ENCODE measurements at regions of chr1 and their contacts with region 1.

Region 1: DNA sequence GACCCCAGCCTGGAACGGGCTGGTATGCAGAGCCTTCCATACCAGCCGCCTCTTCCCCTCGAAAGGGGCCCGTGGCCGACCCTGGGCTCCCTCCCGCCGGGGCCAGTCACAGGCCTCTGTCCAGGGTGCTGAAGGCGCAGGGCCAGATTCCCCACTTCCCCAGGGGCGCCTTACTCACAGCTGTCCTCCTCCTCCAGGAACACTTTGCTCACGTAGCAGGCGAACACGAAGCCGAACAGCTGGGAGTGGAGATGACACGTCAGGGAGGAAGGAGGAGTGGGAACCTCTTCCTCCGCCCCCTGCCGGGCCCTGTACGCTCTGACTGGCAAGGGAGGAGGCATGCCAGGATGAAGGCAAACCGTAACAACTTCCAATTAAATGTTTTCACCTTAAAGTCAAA is 57.3 kb downstream of the NKAIN1 start:
- DNase-seq: peak; percentile 78 to 83
- ATAC-seq: peak; percentile 84 to 94 (median 92)
- H3K4me3 ChIP-seq: peak overlapping the region in 9 of 10 donors; percentile 15 to 40 (median 36)
- H3K27ac ChIP-seq: no peak overlapping the region
- H3K4me1 ChIP-seq: peaks cover 5 to 16% (median 13%) of the 10 kb centered on the region in 9 donors
- H3K27me3 ChIP-seq: peaks cover 0 to 41% (median 38%) of the 10 kb centered on the region in 7 donors
- CTCF ChIP-seq: peak in 4 of 9 donors; percentile 23 to 43 (median 41)

Region 2: GRCh38 chr1:31272369-31272768 is 90.0 kb after region 1 on chr1:
- intact Hi-C with region 1: loop called in 1 of 10 experiments (anchors 10 kb)
- DNase-seq: no peak
- ATAC-seq: peak in 1 of 8 donors; percentile 27
- H3K4me3 ChIP-seq: no peak overlapping the region
- H3K27ac ChIP-seq: no peak overlapping the region
- H3K4me1 ChIP-seq: peaks cover 0 to 9% (median 0%) of the 10 kb centered on the region in 9 donors
- H3K27me3 ChIP-seq: no peaks in the 10 kb centered on the region
- CTCF ChIP-seq: no peak

Region 3: DNA sequence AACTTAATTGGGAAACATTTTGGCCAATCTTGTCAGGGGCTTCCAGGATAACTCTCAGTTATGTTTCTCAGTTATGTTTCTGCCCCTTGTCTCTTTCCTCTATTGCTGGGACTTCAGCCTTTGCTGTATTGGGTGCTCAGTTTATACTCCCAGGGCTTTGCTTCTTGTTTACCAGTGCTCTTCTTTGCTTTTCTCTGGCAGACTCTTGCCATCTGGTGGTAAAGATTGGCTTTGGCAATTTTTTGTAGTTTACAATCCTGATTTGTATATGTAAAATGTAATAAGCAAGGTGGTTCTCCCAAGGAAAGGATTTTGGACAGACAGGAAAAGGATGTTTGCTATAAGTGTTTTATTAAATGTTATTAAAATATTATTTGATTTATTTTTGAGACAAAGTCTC is 152.7 kb after region 1 on chr1:
- intact Hi-C with region 1: loop called in 9 of 10 experiments (anchors 2 to 10 kb)
- DNase-seq: no peak
- ATAC-seq: no peak
- H3K4me3 ChIP-seq: no peak overlapping the region
- H3K27ac ChIP-seq: no peak overlapping the region
- H3K4me1 ChIP-seq: no peaks in the 10 kb centered on the region
- H3K27me3 ChIP-seq: no peaks in the 10 kb centered on the region
- CTCF ChIP-seq: peak in 8 of 9 donors; percentile 14 to 61 (median 48)

Measured in heart right ventricle (tissue), 16 donors.